HepG2 (cell line): ENCODE measurements at regions of chr9 and their contacts with region 1.

Region 1: DNA sequence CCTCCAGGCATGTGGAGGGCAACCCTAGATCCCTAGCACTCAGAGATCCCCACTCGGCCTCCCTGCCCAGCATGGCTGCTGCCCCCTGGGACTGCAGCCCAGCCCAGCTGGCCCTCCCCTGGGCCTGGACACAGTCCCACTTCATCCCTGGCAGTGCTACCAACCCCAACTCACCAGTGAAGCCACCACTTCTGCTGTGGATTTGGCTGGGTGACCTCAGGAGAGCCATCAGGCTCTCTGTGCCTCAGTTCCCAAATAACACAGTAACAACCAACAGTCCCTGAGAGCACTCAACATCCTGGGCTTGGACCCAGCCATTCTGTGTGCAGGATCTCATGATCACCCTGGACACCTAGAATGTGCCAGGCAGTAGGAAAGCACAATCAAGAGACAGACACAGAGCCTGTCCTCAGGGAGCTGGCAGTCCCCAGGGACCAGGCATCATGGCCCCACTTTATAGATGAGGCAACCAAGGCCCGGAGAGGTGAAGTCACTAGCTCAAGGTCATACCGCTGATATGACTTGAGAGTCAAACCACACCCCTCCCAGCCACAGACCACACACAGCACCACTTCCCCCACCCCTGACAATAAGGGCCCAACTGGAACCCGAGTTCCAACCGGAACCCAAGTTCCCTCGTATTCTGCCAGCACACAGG is 4.7 kb upstream of the PSMB7 start:
- DNase-seq: no peak
- ATAC-seq: peak; percentile 11; the same call in 2 of the 3 replicates
- H3K4me3 ChIP-seq: no peak overlapping the region
- H3K27ac ChIP-seq: no peak overlapping the region
- H3K4me1 ChIP-seq: peaks cover 60% of the 10 kb centered on the region
- H3K27me3 ChIP-seq: peaks cover 4 to 17% of the 10 kb centered on the region in 2 experiments; a peak in 2 of 5 replicates
- CTCF ChIP-seq: no peak
- EP300 ChIP-seq: no peak
- POLR2A ChIP-seq: no peak
- RAD21 ChIP-seq: no peak

Region 2: GRCh38 chr9:124447297-124447661 is 27.3 kb after region 1 on chr9:
- CTCF ChIA-PET with region 1: interaction called, 15 read pairs
- POLR2A ChIA-PET with region 1: no interaction called
- in situ Hi-C with region 1: no loop called
- intact Hi-C with region 1: loop called (anchors 1 kb)
- DNase-seq: no peak
- ATAC-seq: 0 out of 3 replicates have a peak, but pooled peaks have one; percentile 15
- H3K4me3 ChIP-seq: no peak overlapping the region
- H3K27ac ChIP-seq: no peak overlapping the region
- H3K4me1 ChIP-seq: peaks cover 10% of the 10 kb centered on the region; the same call in 1 of the 2 replicates
- H3K27me3 ChIP-seq: peaks cover 9 to 34% of the 10 kb centered on the region in 2 experiments; a peak in 3 of 5 replicates
- CTCF ChIP-seq: no peak
- EP300 ChIP-seq: no peak
- POLR2A ChIP-seq: no peak
- RAD21 ChIP-seq: no peak

Region 3: GRCh38 chr9:124480621-124480981 is 60.6 kb after region 1 on chr9:
- CTCF ChIA-PET with region 1: interaction called, 4 read pairs
- POLR2A ChIA-PET with region 1: no interaction called
- in situ Hi-C with region 1: no loop called
- intact Hi-C with region 1: loop called (anchors 1 kb)
- DNase-seq: peak; percentile 34
- ATAC-seq: peak; percentile 74
- H3K4me3 ChIP-seq: no peak overlapping the region
- H3K27ac ChIP-seq: no peak overlapping the region
- H3K4me1 ChIP-seq: peaks cover 21% of the 10 kb centered on the region
- H3K27me3 ChIP-seq: peaks cover 4 to 31% of the 10 kb centered on the region in 2 experiments; a peak in 4 of 5 replicates
- CTCF ChIP-seq: peak; percentile 79
- EP300 ChIP-seq: no peak
- POLR2A ChIP-seq: no peak
- RAD21 ChIP-seq: no peak

Region 4: DNA sequence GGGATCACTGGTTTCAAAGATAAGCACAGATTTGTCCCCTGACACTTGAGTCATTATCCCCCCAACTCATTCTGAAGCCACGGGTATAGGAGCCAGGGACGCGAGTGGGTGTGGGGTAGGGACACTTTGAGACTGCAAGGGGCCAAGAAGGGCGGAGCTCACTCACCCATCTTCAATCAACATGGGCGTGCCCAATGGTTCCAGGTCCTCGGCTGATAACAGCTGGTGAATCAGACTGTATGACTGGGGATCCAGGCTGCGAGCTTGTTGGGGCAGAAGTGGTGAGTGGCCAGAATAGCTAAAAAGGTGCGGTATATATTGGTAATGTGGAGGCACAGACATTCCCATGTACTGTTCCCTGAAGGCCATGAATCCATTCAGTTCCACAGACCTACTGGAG is 118.0 kb after region 1 on chr9:
- CTCF ChIA-PET with region 1: interaction called, 3 read pairs
- POLR2A ChIA-PET with region 1: no interaction called
- in situ Hi-C with region 1: no loop called
- intact Hi-C with region 1: loop called (anchors 1 kb)
- DNase-seq: no peak
- ATAC-seq: no peak
- H3K4me3 ChIP-seq: no peak overlapping the region
- H3K27ac ChIP-seq: no peak overlapping the region
- H3K4me1 ChIP-seq: peaks cover 7% of the 10 kb centered on the region; the same call in 1 of the 2 replicates
- H3K27me3 ChIP-seq: no peaks in the 10 kb centered on the region
- CTCF ChIP-seq: no peak
- EP300 ChIP-seq: no peak
- POLR2A ChIP-seq: no peak
- RAD21 ChIP-seq: no peak